ENCODE measurements at regions of chr13 and their contacts with region 1.

Region 1: GRCh38 chr13:95191821-95192563 is 109.3 kb downstream of the ABCC4 start:
- DNase-seq: peak; percentile 78 to 89 (median 78)
- H3K4me3 ChIP-seq: no peak overlapping the region
- H3K27ac ChIP-seq: no peak overlapping the region
- H3K4me1 ChIP-seq: no peaks in the 10 kb centered on the region
- H3K27me3 ChIP-seq: no peaks in the 10 kb centered on the region
- CTCF ChIP-seq: peak; percentile 52 to 73 (median 58)
- EP300 ChIP-seq: no peak
- POLR2A ChIP-seq: no peak

Region 2: DNA sequence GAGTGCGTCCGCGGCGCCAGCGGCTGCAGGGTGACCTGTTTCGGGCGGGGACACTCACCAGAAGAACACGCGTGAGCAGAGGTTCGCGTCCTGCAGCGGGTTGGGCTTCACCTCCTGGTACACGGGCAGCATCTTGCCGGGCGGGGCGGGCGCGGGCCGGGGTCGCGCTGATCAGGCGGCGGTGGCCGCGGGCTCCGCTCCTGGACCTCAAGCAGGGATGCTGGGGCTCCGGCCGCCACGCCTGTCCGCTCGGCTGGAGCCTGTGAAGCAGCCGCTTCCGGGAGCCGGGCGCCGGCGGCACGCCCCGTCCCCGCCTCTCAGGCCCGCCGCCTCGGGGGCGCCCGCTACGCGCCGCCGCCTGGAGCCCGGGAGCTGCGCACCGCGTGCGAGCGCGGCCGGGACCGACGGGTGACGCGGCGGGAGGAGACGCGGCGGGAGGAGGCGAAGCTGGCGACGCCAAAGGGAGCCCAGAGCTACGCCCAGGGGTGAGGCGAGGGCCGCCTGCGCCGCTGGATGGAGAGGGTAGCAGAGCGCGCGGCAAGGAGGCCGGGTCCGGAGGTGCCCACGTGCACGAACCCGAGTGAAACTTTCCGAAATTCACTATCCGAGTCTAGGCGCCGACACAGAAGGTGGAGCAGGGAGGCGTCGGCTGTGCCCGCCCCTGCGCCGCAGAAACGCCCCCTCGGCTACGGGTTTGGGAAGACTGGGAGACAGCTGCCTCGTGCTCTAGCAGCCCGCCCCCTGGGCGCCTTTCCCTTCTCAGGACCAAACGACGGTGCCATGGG is 109.4 kb after region 1 on chr13 and contains the start of gene ABCC4:
- intact Hi-C with region 1: loop called in 1 of 4 experiments (anchors 10 kb)
- DNase-seq: peak; percentile 40 to 75 (median 65)
- H3K4me3 ChIP-seq: peak within 1 kb of the TSS; percentile 66
- H3K27ac ChIP-seq: peak within 1 kb of the TSS; percentile 5 to 53
- H3K4me1 ChIP-seq: no peaks in the 10 kb centered on the region
- H3K27me3 ChIP-seq: no peaks in the 10 kb centered on the region
- CTCF ChIP-seq: no peak
- EP300 ChIP-seq: no peak
- POLR2A ChIP-seq: no peak
- total RNA-seq, gene ABCC4: 7.3 to 28.5 (median 12.9) TPM

Region 3: DNA sequence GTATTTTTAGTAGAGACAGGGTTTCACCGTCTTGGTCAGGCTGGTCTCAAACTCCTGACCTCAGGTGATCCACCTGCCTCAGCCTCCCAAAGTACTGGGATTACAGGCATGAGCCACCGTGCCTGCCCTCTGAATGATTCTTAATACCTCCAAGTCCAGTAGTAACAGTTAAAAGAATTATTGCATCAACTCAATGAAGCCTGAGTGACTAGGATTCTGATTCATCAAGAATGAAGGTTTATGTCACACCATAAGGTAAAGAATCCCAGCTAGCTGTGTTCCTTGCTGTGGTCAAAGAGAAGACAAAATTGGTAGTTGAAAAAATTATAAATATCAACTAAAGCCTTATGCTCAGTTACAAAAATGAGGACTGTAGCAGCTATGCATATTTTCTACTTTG is 190.4 kb after region 1 on chr13:
- intact Hi-C with region 1: loop called in 2 of 4 experiments (anchors 5 kb)
- DNase-seq: no peak
- H3K4me3 ChIP-seq: no peak overlapping the region
- H3K27ac ChIP-seq: no peak overlapping the region
- H3K4me1 ChIP-seq: peaks cover 1% of the 10 kb centered on the region
- H3K27me3 ChIP-seq: no peaks in the 10 kb centered on the region
- CTCF ChIP-seq: no peak
- EP300 ChIP-seq: no peak
- POLR2A ChIP-seq: no peak

Region 4: DNA sequence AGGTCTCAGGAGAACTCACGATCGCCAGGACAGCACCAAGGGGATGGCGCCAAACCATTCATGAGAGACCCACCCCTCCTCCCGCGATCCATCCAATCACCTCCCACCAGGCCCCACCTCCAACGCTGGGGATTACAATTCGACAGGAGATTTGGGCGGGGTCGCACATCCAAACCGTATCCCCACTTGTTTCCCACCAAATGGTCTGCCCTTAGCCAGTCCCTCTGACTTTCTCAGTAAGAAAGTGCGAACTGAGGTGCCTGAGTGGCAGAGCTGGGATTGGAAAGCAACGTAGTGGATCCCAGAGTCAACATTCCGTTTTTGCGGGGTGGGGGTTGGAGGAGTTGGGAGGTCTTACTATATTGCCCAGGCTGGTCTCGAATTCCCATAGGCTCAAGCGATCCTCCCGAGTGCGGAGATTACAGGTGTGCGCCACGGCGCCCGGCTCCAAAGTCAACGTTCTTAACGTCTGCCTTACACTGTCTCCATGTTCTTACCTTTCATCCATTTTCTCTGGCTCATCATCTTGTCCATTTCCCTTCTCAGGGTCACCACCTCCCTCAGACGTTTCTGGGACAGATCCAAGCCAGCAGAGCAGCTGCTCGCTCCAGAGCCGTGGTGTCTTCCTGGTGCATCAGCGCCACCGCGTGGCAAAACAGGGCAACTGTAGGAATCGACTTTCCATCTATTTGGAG is 212.0 kb after region 1 on chr13:
- intact Hi-C with region 1: loop called (anchors 1 to 10 kb)
- DNase-seq: peak; percentile 80 to 88 (median 85)
- H3K4me3 ChIP-seq: no peak overlapping the region
- H3K27ac ChIP-seq: no peak overlapping the region
- H3K4me1 ChIP-seq: peaks cover 2% of the 10 kb centered on the region
- H3K27me3 ChIP-seq: no peaks in the 10 kb centered on the region
- CTCF ChIP-seq: peak; percentile 86 to 89 (median 87)
- EP300 ChIP-seq: no peak
- POLR2A ChIP-seq: no peak